ENCODE measurements at regions of chr7 and their contacts with region 1.

Region 1: DNA sequence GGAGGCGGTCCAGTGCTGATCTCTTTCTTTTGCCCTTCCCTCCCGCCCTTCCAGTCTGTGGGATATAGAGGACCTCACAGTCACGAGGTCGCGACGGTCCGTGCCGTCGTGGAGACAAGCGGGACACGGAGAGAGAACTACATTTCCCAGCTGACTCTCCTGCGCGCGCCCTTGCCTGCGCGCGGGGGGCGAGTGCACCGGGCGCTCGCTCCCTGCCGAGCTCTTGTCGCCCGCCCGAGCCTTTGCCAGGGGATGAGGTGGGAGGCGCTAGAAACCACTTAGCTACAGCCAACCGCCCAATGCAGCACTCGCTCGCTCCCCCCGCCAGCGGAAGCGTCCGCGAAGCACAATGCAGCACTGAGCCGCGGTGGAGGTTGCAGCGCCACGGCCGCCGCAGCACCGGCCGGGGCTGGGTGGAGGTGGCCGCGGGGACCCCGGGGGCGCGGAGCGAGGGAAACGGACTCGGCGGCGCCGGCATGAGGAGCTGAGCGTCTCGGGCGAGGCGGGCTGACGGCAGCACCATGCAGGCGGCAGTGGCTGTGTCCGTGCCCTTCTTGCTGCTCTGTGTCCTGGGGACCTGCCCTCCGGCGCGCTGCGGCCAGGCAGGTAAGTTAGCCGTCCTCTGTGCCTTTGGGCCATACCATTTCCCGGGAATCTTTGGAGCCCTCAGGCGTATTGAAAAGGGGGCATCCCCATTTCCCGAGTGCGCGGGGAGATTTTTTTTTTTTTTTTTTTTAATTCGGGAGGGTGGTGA is at the start of gene ADAM22:
- DNase-seq: peak; percentile 88 to 91 (median 89)
- ATAC-seq: peak; percentile 96 to 100 (median 100)
- H3K4me3 ChIP-seq: peak within 1 kb of the TSS; percentile 58 to 93 (median 79)
- H3K27ac ChIP-seq: peak within 1 kb of the TSS in 6 of 12 donors; percentile 28 to 79 (median 55)
- H3K4me1 ChIP-seq: peaks cover 0 to 14% (median 6%) of the 10 kb centered on the region in 12 donors
- H3K27me3 ChIP-seq: no peaks in the 10 kb centered on the region
- CTCF ChIP-seq: peak in 4 of 12 donors; percentile 9 to 42 (median 18)
- POLR2A ChIP-seq: no peak
- total RNA-seq, gene ADAM22: 0.75 to 3.4 (median 1.5) TPM

Region 2: GRCh38 chr7:87876040-87876868 is 57.9 kb before region 1 on chr7 and contains the starts of genes DBF4 and SLC25A40:
- intact Hi-C with region 1: no loop called
- DNase-seq: peak; percentile 95 to 97 (median 96)
- ATAC-seq: peak; percentile 92 to 99 (median 98)
- H3K4me3 ChIP-seq: peak within 1 kb of the TSS; percentile 62 to 94 (median 76)
- H3K27ac ChIP-seq: peak within 1 kb of the TSS; percentile 60 to 94 (median 91)
- H3K4me1 ChIP-seq: peaks cover 0 to 48% (median 18%) of the 10 kb centered on the region in 12 donors
- H3K27me3 ChIP-seq: no peaks in the 10 kb centered on the region
- CTCF ChIP-seq: peak in 1 of 12 donors; percentile 10
- POLR2A ChIP-seq: peak in 1 of 2 donors; percentile 49
- total RNA-seq, gene DBF4: 1.0 to 7.8 (median 2.8) TPM
- total RNA-seq, gene SLC25A40: 11.0 to 29.1 (median 22.6) TPM

Region 3: GRCh38 chr7:87982116-87982515 is 48.0 kb after region 1 on chr7:
- intact Hi-C with region 1: no loop called
- DNase-seq: no peak
- ATAC-seq: no peak
- H3K4me3 ChIP-seq: no peak overlapping the region
- H3K27ac ChIP-seq: no peak overlapping the region
- H3K4me1 ChIP-seq: no peaks in the 10 kb centered on the region
- H3K27me3 ChIP-seq: no peaks in the 10 kb centered on the region
- CTCF ChIP-seq: no peak
- POLR2A ChIP-seq: no peak

Region 4: DNA sequence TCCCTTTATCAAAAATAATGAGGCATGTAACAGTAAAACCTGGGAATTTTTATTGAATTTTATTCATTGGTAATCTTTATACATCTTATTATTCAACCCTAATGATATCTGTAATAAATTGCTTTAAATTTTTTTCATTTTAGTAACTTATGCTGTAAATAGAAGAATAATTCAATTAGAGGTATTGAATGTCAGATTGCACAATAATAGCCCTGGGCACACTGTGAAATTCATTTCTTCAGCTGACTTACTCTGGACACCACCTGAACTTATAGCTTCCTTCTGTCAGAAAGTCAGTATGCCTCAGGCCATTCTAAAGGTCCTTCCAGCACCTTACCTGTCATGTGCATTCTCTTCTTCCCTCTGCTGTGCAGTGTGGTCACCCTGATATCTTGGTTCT is 59.1 kb after region 1 on chr7:
- intact Hi-C with region 1: loop called in 1 of 10 experiments (anchors 10 kb)
- DNase-seq: no peak
- ATAC-seq: no peak
- H3K4me3 ChIP-seq: no peak overlapping the region
- H3K27ac ChIP-seq: no peak overlapping the region
- H3K4me1 ChIP-seq: no peaks in the 10 kb centered on the region
- H3K27me3 ChIP-seq: no peaks in the 10 kb centered on the region
- CTCF ChIP-seq: no peak
- POLR2A ChIP-seq: no peak

Region 5: DNA sequence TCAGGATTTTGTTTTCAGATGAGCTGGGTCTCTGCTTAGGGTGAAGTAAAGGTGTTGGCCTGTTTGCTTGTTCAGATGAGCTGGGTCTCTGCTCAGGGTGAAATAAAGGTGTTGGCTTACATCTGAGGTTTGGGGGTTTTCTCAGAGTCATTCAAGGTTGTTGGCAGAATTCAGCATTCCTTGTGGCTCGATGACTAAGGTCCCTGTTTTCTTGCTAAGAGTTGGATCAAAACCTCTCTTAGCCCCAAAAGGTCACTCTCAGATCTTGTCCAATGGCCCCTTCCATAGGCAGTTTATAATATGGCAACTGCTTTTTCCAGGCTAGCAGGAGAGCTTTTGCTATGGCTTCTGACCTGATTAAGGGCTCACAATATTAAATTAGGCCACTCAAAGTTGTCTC is 106.6 kb after region 1 on chr7:
- intact Hi-C with region 1: loop called in 1 of 10 experiments (anchors 5 kb)
- DNase-seq: no peak
- ATAC-seq: no peak
- H3K4me3 ChIP-seq: no peak overlapping the region
- H3K27ac ChIP-seq: no peak overlapping the region
- H3K4me1 ChIP-seq: peaks cover 0 to 4% (median 0%) of the 10 kb centered on the region in 12 donors
- H3K27me3 ChIP-seq: no peaks in the 10 kb centered on the region
- CTCF ChIP-seq: no peak
- POLR2A ChIP-seq: no peak

Region 6: GRCh38 chr7:88111136-88111743 is 177.1 kb after region 1 on chr7:
- intact Hi-C with region 1: loop called in 3 of 10 experiments (anchors 10 kb)
- DNase-seq: no peak
- ATAC-seq: peak in 1 of 4 donors; percentile 53
- H3K4me3 ChIP-seq: no peak overlapping the region
- H3K27ac ChIP-seq: no peak overlapping the region
- H3K4me1 ChIP-seq: peaks cover 0 to 13% (median 2%) of the 10 kb centered on the region in 12 donors
- H3K27me3 ChIP-seq: no peaks in the 10 kb centered on the region
- CTCF ChIP-seq: peak; percentile 36 to 76 (median 62)
- POLR2A ChIP-seq: no peak

Measured in heart left ventricle (tissue), 16 donors.